AG04450 (cell line): ENCODE measurements at regions of chr12 and their contacts with region 1.

Region 1: DNA sequence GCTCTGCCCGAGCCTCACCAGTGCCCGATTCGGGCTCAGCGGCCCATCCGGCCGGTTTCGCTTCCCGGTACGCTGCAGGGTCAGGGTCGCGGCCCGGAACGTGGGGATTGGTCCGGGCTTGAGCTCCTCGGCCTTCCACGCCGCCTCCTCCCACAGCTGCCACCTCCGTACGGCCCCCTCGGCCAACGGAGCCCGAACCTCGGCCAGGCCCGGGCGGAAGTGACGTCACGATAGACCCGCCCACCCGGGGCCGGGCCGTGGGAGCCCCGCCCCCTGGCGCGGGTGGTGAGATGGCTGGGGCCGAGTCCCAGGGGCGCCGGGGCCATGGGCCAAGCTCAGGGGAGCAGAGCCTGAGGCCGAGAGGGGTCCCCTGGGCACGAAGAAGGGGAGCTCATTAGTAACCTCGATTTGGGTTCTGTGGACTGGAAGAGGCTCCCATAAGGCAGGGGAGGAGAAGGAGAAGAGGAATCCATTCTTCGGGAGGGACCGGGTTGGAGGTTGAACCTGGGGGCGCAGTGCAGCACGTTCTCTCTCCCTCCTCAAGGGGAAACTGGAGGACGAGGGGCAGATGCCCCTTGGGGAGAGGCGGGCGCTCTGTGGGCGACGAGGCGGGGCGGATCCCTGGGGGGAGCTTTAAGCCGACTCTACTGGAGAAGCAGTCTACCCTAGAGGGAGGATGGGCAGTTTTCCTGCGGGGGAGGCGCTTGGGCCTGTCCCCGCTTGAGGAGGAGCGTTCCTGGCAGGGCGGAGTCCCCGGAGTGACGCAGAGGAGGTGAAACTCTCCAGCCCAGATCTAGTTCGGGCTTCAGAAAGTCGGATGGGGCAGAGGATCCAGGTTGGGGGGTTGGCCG is at the start of gene MLF2:
- DNase-seq: peak; percentile 98
- H3K4me3 ChIP-seq: peak within 1 kb of the TSS; percentile 87
- H3K27ac ChIP-seq: peak within 1 kb of the TSS; percentile 98
- H3K27me3 ChIP-seq: no peaks in the 10 kb centered on the region
- CTCF ChIP-seq: no peak
- polyA plus RNA-seq, gene MLF2: 241 and 263 TPM in 2 replicates

Region 2: DNA sequence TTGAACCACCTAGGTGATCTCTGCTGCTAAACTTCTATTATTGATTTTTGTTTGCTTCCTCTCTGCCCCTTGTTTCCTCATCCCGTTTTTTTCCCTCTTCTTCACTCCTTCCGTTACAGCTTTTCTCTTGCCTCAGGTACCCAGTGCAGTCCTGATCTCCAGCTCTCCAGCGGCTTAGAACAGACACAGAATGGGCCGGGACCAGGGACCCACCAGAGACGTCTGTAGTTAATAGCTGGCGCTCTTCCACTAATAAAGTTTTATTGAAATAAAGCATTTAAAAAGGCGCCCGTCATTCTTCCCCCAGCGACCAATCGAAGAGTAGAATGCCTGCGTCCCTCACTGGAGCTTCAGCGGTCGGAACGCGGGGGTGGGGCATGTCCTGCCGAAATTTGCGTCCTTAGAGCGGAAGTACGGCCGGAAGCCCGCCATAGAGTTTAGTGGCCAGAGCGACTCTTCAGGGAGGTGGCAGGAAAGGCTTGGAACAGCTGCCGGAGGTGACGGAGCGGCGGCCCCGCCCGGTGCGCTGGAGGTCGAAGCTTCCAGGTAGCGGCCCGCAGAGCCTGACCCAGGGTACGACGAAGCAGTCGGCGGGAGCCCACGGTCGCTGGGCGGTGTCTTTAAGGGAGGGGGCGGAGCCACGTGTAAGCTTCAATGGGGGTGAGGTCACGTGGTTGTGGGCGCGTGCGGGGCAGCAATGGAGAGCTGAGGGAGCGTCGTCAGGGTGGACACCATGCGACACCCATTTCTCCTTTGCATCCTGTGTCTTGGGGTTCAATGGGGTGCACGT is 29.3 kb before region 1 on chr12 and contains the start of gene COPS7A:
- CTCF ChIA-PET with region 1: interaction called, 14 read pairs
- POLR2A ChIA-PET with region 1: interaction called, 22 read pairs
- DNase-seq: peak; percentile 91
- H3K4me3 ChIP-seq: peak within 1 kb of the TSS; percentile 62
- H3K27ac ChIP-seq: peak within 1 kb of the TSS; percentile 92
- H3K27me3 ChIP-seq: no peaks in the 10 kb centered on the region
- CTCF ChIP-seq: no peak
- polyA plus RNA-seq, gene COPS7A: 93.2 and 104 TPM in 2 replicates

Region 3: GRCh38 chr12:6764011-6764828 is 11.1 kb after region 1 on chr12:
- CTCF ChIA-PET with region 1: interaction called, 136 read pairs
- POLR2A ChIA-PET with region 1: interaction called, 89 read pairs
- DNase-seq: peak; percentile 98
- H3K4me3 ChIP-seq: peak overlapping the region; percentile 49
- H3K27ac ChIP-seq: peak overlapping the region; percentile 94
- H3K27me3 ChIP-seq: no peaks in the 10 kb centered on the region
- CTCF ChIP-seq: no peak

Region 4: DNA sequence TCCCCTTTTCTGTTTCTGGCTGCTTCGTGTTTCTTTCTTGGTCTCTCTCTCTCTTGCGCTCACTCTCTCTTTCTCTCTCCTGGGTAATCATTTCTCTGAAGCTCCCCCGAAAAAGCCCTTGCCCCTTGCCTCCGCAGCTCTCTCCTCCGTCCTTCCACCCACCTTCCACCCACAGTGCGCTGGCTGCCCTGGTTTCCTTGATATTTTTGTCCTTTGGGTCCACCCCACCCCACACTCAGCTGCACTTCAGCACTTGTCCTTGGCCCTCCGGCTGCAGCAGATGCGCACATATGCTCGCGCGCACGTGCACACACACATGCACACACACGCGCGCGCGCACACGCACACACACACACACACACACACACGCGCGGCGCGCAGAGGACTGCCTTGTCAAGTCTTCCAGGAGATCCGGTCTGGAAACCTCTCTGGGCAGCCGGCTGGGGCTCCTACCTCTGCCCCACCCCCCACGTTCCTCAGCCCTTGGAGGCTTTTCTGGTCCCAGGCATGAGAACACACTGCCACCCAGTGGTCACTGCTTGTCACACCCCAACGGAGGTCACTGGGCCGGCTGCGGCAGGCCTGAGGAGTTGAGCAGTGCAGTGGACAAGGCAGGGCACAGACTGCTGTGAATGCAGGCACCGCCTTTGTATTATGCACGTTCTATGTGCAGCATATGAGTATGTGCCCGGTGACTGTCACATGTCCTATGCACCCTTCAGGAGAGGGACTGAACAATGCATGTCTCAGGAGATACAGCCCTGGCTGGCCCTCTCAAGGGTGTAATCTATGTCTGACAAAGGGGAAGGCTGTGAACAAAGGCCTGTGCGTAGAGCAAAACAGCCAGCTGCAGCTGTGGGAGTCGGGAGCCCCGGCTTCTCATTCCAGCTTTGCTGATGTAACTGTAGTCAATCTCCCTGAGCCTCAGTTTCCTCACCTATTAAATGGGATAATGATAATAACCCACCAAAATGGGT is 25.7 kb after region 1 on chr12:
- CTCF ChIA-PET with region 1: interaction called, 124 read pairs
- POLR2A ChIA-PET with region 1: interaction called, 12 read pairs
- DNase-seq: peak; percentile 85
- H3K4me3 ChIP-seq: peak overlapping the region; percentile 55
- H3K27ac ChIP-seq: peak overlapping the region; percentile 39
- H3K27me3 ChIP-seq: no peaks in the 10 kb centered on the region
- CTCF ChIP-seq: peak; percentile 92

Region 5: DNA sequence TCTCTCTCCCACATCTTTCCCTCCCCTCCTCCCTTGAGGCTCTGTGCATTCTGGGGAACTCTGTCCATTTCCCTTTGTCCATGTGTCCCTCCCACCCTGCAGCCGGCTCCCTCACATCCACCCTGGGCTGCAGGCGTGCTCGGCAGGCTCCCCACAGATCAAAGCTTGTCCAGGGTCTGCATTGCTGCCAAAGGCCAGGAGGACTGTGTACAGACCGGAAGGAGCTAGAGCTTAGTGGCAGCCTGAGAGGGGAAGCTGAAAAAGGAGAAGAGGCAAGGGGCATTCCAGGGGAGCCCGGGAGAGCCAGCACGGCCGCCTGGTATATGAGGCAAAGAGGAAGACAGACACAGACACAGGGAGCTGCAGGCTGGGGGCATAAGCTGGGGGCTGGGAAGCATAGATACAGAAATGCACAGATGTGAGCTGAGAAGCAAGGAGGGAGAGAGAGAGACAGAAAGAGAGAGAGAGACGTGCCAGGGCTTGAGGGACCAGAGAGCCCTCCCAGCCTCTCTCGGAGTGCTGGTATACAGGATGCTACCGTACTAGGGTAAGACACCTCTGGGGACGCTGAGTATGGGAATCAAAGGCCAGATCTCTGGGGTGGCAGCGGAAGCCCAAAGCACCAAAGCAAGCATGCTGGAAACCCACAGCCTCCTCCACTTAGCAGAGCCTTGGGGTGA is 39.5 kb after region 1 on chr12:
- CTCF ChIA-PET with region 1: interaction called, 16 read pairs
- POLR2A ChIA-PET with region 1: interaction called, 11 read pairs
- DNase-seq: no peak
- H3K4me3 ChIP-seq: peak overlapping the region; percentile 31
- H3K27ac ChIP-seq: peak overlapping the region; percentile 31
- H3K27me3 ChIP-seq: peaks cover 4% of the 10 kb centered on the region
- CTCF ChIP-seq: no peak

Region 6: GRCh38 chr12:6825398-6826124 is 72.4 kb after region 1 on chr12:
- CTCF ChIA-PET with region 1: interaction called, 165 read pairs
- POLR2A ChIA-PET with region 1: interaction called, 26 read pairs
- DNase-seq: peak; percentile 60
- H3K4me3 ChIP-seq: peak overlapping the region; percentile 36
- H3K27ac ChIP-seq: no peak overlapping the region
- H3K27me3 ChIP-seq: no peaks in the 10 kb centered on the region
- CTCF ChIP-seq: peak; percentile 96

Region 7: DNA sequence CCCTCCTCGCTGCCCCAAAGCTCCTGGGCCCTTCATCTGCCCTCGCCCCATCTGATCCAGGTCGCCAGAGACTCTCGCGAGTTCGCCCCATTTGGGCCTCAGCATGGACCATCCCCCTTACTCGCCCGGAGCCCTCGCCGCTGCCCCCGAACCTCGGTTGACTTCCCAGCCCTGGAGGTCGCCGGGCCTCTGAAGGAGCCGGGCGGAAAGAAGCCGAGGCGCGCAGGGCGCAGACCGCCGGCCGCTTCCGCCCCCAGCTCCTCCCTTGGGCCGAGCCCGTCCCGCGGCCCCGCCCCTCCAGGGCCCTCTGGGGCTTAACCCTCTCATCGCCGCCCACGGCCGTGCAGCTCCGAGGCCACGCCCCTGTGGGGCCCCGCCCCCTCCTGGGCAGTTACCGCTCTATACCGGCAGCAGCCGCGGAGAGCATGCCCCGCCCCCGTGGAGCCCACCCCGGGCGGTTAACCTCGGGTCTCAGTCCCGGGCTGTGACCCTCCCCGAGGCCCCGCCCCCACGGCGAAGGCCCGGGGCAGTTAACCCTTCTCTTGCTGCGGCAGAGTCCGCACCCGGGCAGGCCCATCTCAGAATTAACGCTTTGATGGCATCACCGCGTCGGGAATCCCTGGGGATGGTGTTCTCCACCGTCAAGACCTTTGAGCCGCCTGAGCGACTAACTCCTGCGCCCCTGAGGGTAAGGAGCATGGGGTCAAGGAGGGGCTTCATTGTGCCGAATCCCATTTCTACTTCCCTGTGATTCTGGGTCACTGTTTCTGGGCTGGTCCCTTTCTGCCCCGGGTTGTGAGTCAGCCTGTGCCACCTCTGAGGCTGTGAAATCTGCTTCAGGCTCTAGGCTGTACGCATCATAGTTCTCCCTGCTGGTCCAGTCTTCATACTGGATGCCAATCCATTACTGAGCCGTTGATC is 120.2 kb after region 1 on chr12 and contains the start of gene SPSB2:
- CTCF ChIA-PET with region 1: interaction called, 19 read pairs
- POLR2A ChIA-PET with region 1: interaction called, 11 read pairs
- DNase-seq: peak; percentile 79
- H3K4me3 ChIP-seq: peak within 1 kb of the TSS; percentile 84
- H3K27ac ChIP-seq: peak within 1 kb of the TSS; percentile 81
- H3K27me3 ChIP-seq: no peaks in the 10 kb centered on the region
- CTCF ChIP-seq: no peak
- polyA plus RNA-seq, gene SPSB2: 2.6 and 3.7 TPM in 2 replicates

Region 8: GRCh38 chr12:6887460-6887859 is 134.3 kb after region 1 on chr12:
- CTCF ChIA-PET with region 1: no interaction called
- POLR2A ChIA-PET with region 1: no interaction called
- DNase-seq: no peak
- H3K4me3 ChIP-seq: no peak overlapping the region
- H3K27ac ChIP-seq: no peak overlapping the region
- H3K27me3 ChIP-seq: no peaks in the 10 kb centered on the region
- CTCF ChIP-seq: no peak